Motor neuron (in vitro differentiated cells): ENCODE measurements at regions of chr11 and their contacts with region 1.

Region 1: GRCh38 chr11:12052676-12053605 is 44.5 kb upstream of the DKK3 start:
- ATAC-seq: no peak
- H3K4me3 ChIP-seq: no peak overlapping the region
- H3K27ac ChIP-seq: no peak overlapping the region
- H3K4me1 ChIP-seq: peaks cover 0 to 8% of the 10 kb centered on the region in 2 donors

Region 2: DNA sequence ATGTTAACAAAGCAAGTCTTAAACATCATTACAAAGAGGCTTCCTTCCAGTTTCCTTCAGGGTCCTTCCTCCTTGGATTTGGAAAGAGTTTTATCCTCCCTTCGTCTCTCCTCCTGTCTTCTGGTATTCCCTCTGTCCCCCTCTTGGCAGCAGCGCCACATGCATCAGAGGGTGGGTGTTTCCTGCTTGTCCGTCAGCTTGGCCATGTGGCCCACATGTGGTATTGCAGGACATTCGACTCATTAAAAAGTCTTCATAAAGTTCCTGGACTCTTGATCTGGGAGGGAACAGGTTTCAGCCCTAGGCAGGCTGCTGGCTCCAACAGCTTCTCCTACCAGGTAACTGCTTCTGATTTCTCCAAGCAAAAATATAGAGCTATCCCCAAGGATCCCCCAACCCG is 889.7 kb before region 1 on chr11:
- in situ Hi-C with region 1: no loop called
- ATAC-seq: peak in 3 of 8 experiments; percentile 94 to 97 (median 94)
- H3K4me3 ChIP-seq: no peak overlapping the region
- H3K27ac ChIP-seq: no peak overlapping the region
- H3K4me1 ChIP-seq: peaks cover 0 to 3% of the 10 kb centered on the region in 2 donors

Region 3: DNA sequence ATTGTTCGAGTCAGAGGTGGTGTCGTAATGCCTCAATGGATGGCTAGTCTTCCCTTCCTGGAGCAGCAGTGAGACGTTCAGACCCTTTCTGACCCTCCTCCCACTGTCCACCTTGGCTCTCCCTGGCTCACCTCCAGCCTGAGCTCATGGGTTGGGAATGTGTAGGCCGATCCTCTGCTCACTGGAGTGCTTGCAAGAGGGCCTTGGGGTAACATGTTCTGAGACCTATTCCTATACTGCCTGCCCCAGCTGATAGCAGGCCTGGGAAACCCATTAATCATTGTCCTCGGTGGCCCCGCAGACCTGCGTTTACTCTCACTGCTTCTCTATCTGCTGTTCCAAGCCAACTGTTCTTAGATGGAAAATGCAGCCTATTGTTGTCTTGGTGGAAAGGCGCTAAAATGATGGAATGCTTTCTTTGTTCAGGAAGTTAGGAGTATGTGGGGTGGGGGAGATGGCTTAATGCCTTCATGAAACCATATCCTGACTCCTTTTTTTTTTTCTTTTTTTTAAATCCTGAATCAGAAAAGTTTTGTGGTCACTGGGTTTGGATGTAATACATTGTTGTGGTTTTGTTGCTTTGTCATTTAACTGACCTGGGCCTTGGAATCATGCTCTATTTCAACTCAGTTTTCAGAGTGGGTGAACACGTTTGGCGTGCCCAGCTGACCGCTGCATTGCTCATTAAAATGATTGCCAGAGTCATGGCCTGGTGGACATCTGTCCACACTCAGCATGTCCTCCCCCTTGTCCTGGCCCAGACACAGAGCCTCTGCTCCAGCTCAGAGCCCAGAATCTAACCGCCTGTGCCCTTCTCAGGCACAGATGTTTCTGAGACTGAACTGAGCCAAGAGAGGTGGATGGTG is 130.0 kb after region 1 on chr11:
- in situ Hi-C with region 1: no loop called
- ATAC-seq: peak in 7 of 8 experiments; percentile 54 to 78 (median 67)
- H3K4me3 ChIP-seq: no peak overlapping the region
- H3K27ac ChIP-seq: no peak overlapping the region
- H3K4me1 ChIP-seq: peaks cover 0 to 8% of the 10 kb centered on the region in 2 donors

Region 4: GRCh38 chr11:12274558-12275197 is 221.7 kb after region 1 on chr11:
- in situ Hi-C with region 1: loop called in 2 of 9 experiments (anchors 10 kb)
- ATAC-seq: peak in 4 of 8 experiments; percentile 81 to 93 (median 86)
- H3K4me3 ChIP-seq: no peak overlapping the region
- H3K27ac ChIP-seq: no peak overlapping the region
- H3K4me1 ChIP-seq: peaks cover 0 to 3% of the 10 kb centered on the region in 2 donors